Posterior cingulate gyrus (tissue), 11 donors: ENCODE measurements at regions of chr16 and their contacts with region 1.

Region 1: DNA sequence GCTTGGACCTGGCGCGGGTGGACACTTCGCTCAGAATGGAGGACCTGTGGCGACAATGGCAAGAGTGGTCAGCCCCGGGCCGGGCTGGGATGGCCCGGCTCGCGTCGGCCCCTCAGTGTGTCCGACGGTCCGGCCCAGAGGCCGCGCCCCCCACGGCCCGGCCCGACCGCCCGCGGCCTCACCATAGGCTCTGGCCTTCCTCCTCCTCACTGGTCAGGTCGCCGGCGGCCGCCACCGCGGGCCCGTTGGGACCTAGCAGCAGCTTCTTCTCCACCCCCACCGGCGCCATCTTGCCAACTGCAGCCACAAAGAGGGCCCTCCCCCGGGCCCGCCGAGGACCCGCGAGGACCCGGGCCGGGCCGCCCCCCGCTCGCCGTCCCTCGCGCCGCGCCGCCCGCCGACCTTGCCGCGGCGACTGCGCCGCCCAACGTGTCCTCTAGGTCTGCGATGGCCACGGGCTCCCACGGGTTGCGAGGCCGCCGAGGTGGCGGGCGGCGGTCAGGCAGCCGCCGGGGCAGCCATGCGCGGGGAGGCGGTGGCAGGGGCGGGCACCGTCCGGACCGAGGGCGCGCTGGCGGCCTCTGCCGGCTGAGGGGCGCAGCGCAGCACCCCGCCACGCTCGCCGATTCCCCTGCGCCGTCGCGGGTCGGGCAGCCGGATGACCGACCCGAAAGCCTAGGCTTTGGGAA is at the start of gene DYNC1LI2:
- DNase-seq: peak; percentile 63 to 97 (median 78)

Region 2: GRCh38 chr16:66728117-66728787 is 23.2 kb before region 1 on chr16:
- intact Hi-C with region 1: loop called (anchors 1 kb)
- DNase-seq: peak in 3 of 10 donors; percentile 14 to 29 (median 17)

Region 3: DNA sequence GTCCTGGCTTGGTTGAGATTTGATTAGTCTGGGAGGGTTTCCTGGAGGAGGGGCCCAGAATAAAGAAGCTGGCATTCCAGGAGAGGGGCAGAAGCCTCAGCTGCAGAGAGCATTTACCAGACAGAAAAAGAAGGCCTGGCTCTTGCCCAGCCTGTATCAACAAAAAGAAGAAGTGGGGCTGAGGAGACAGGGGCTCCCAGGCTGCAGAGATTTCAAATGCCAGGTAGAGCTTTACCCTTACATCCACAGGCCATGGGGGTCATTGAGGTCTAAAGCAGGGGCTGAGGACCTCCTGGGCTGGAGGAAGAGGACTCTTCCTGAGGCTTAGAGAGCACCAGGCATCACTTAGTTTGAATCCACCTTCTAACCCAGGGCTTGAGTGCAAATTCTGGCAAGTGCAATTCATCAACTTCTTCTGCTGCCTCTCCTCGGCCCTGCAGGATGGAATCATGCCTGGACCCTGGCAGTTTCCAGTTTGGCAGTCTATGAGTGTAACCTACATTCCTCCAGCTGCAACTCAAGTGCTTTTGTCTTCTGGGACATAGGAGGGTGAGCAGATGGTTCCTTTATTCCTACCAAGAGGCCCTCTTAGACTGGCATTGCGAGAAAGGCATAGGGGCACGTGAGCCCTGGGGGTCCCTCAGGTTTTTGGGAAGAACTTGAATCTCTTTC is 108.1 kb after region 1 on chr16:
- intact Hi-C with region 1: loop called (anchors 10 kb)
- DNase-seq: peak in 4 of 10 donors; percentile 30 to 83 (median 58)

Region 4: GRCh38 chr16:66977341-66978113 is 226.1 kb after region 1 on chr16:
- intact Hi-C with region 1: no loop called
- DNase-seq: peak; percentile 80 to 99 (median 94)